PC-9 (cell line): ENCODE measurements at regions of chr6 and their contacts with region 1.

Region 1: GRCh38 chr6:28940858-28941680 is 17.3 kb upstream of the TRIM27 start:
- DNase-seq: peak; percentile 77 to 80
- H3K4me3 ChIP-seq: peak overlapping the region; percentile 65
- H3K27ac ChIP-seq: peak overlapping the region; percentile 76
- H3K4me1 ChIP-seq: peaks cover 24% of the 10 kb centered on the region
- H3K27me3 ChIP-seq: no peaks in the 10 kb centered on the region
- CTCF ChIP-seq: no peak

Region 2: GRCh38 chr6:27720607-27721580 is 1220.2 kb before region 1 on chr6:
- CTCF ChIA-PET with region 1: no interaction called
- POLR2A ChIA-PET with region 1: no interaction called
- intact Hi-C with region 1: no loop called
- DNase-seq: peak; percentile 57 to 71
- H3K4me3 ChIP-seq: peak overlapping the region; percentile 49
- H3K27ac ChIP-seq: peak overlapping the region; percentile 68
- H3K4me1 ChIP-seq: peaks cover 21% of the 10 kb centered on the region
- H3K27me3 ChIP-seq: no peaks in the 10 kb centered on the region
- CTCF ChIP-seq: peak; percentile 23; the same call in 1 of the 2 replicates

Region 3: GRCh38 chr6:28683944-28684538 is 257.0 kb before region 1 on chr6:
- CTCF ChIA-PET with region 1: interaction called, 3 read pairs
- POLR2A ChIA-PET with region 1: no interaction called
- intact Hi-C with region 1: loop called (anchors 5 kb)
- DNase-seq: peak in 1 of 2 experiments; percentile 42
- H3K4me3 ChIP-seq: peak overlapping the region; percentile 39; the same call in 1 of the 2 replicates
- H3K27ac ChIP-seq: no peak overlapping the region
- H3K4me1 ChIP-seq: no peaks in the 10 kb centered on the region
- H3K27me3 ChIP-seq: no peaks in the 10 kb centered on the region
- CTCF ChIP-seq: peak; percentile 87

Region 4: DNA sequence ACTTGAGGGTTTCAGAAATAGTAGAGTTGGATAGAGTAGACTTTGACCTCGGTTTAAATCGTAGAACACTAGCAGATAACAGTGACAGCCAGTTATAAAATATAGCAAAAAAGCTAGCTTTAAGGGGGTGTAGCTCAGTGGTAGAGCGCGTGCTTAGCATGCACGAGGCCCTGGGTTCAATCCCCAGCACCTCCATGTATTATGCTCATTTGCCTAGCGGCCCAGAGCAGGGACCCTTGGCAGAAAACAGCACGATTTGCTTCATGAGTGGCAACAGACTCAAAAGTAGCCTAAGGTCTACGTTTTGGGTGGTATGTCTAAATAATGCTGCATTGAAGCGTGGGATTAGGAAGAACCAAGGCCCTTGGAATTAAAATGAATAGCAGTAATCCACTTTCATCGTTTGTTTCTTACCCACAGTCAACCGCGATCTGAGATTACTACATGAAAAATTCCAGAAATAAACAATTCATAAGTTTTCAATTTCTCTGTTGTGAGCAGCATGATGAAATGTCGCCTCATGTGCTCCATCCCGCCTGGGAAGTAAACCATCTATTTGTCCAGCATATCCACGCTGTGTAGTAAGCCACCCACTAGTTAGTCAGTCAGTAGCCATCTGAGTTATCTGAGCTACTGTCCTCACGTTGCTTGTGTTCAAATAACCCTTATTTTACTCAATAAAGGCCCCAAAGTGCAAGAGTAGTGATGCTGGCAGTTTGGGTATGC is 230.4 kb before region 1 on chr6:
- CTCF ChIA-PET with region 1: no interaction called
- POLR2A ChIA-PET with region 1: no interaction called
- intact Hi-C with region 1: no loop called
- DNase-seq: peak in 1 of 2 experiments; percentile 52
- H3K4me3 ChIP-seq: peak overlapping the region; percentile 69
- H3K27ac ChIP-seq: no peak overlapping the region
- H3K4me1 ChIP-seq: no peaks in the 10 kb centered on the region
- H3K27me3 ChIP-seq: no peaks in the 10 kb centered on the region
- CTCF ChIP-seq: no peak

Region 5: GRCh38 chr6:28838634-28839442 is 102.2 kb before region 1 on chr6:
- CTCF ChIA-PET with region 1: no interaction called
- POLR2A ChIA-PET with region 1: no interaction called
- intact Hi-C with region 1: loop called (anchors 1 kb)
- DNase-seq: peak; percentile 71 to 83
- H3K4me3 ChIP-seq: peak overlapping the region; percentile 95
- H3K27ac ChIP-seq: peak overlapping the region; percentile 44
- H3K4me1 ChIP-seq: peaks cover 13% of the 10 kb centered on the region
- H3K27me3 ChIP-seq: no peaks in the 10 kb centered on the region
- CTCF ChIP-seq: peak; percentile 74

Region 6: GRCh38 chr6:28880894-28881780 is 59.9 kb before region 1 on chr6:
- CTCF ChIA-PET with region 1: no interaction called
- POLR2A ChIA-PET with region 1: no interaction called
- intact Hi-C with region 1: loop called (anchors 5 kb)
- DNase-seq: peak; percentile 60 to 72
- H3K4me3 ChIP-seq: peak overlapping the region; percentile 53
- H3K27ac ChIP-seq: no peak overlapping the region
- H3K4me1 ChIP-seq: no peaks in the 10 kb centered on the region; the same call in 1 of the 2 replicates
- H3K27me3 ChIP-seq: no peaks in the 10 kb centered on the region
- CTCF ChIP-seq: no peak

Region 7: GRCh38 chr6:28923318-28924102 is 17.6 kb before region 1 on chr6 and contains the start of gene TRIM27:
- CTCF ChIA-PET with region 1: no interaction called
- POLR2A ChIA-PET with region 1: no interaction called
- intact Hi-C with region 1: loop called (anchors 1 kb)
- DNase-seq: peak; percentile 83 to 94
- H3K4me3 ChIP-seq: peak within 1 kb of the TSS; percentile 91
- H3K27ac ChIP-seq: peak within 1 kb of the TSS; percentile 76
- H3K4me1 ChIP-seq: peaks cover 20% of the 10 kb centered on the region
- H3K27me3 ChIP-seq: no peaks in the 10 kb centered on the region
- CTCF ChIP-seq: no peak
- total RNA-seq, gene TRIM27: 67.2 and 86.2 TPM in 2 replicates

Region 8: GRCh38 chr6:28981833-28982475 is 40.9 kb after region 1 on chr6:
- CTCF ChIA-PET with region 1: interaction called, 8 read pairs
- POLR2A ChIA-PET with region 1: interaction called, 6 read pairs
- intact Hi-C with region 1: loop called (anchors 1 kb)
- DNase-seq: peak; percentile 82 to 86
- H3K4me3 ChIP-seq: peak overlapping the region; percentile 76
- H3K27ac ChIP-seq: peak overlapping the region; percentile 81
- H3K4me1 ChIP-seq: peaks cover 55% of the 10 kb centered on the region
- H3K27me3 ChIP-seq: no peaks in the 10 kb centered on the region
- CTCF ChIP-seq: peak; percentile 2; the same call in 1 of the 2 replicates